CD4-positive, alpha-beta memory T cell (primary cell): ENCODE measurements at regions of chr6 and their contacts with region 1.

Region 1: GRCh38 chr6:167350731-167351655 is 26.1 kb downstream of the TTLL2 start:
- DNase-seq: peak; percentile 79 to 87 (median 82)
- H3K4me3 ChIP-seq: peak overlapping the region; percentile 36 to 72
- H3K4me3 Mint-ChIP-seq: peak overlapping the region; percentile 80 to 96 (median 92)
- H3K27ac ChIP-seq: no peak overlapping the region
- H3K27ac Mint-ChIP-seq: peak overlapping the region; percentile 23 to 93 (median 88)
- H3K4me1 ChIP-seq: peaks cover 17% of the 10 kb centered on the region
- H3K4me1 Mint-ChIP-seq: peaks cover 12 to 25% (median 17%) of the 10 kb centered on the region in 4 donors
- H3K27me3 ChIP-seq: no peaks in the 10 kb centered on the region
- H3K27me3 Mint-ChIP-seq: peaks cover 0 to 3% of the 10 kb centered on the region in 2 donors

Region 2: GRCh38 chr6:167221400-167222201 is 129.4 kb before region 1 on chr6:
- CTCF ChIA-PET with region 1: interaction called, 5 read pairs
- POLR2A ChIA-PET with region 1: no interaction called
- intact Hi-C with region 1: loop called (anchors 5 kb)
- DNase-seq: no peak
- H3K4me3 ChIP-seq: no peak overlapping the region
- H3K4me3 Mint-ChIP-seq: peak overlapping the region in 1 of 8 donors; percentile 52
- H3K27ac ChIP-seq: no peak overlapping the region
- H3K27ac Mint-ChIP-seq: no peak overlapping the region
- H3K4me1 ChIP-seq: no peaks in the 10 kb centered on the region
- H3K4me1 Mint-ChIP-seq: peaks cover 0 to 4% (median 0%) of the 10 kb centered on the region in 4 donors
- H3K27me3 ChIP-seq: no peaks in the 10 kb centered on the region
- H3K27me3 Mint-ChIP-seq: peaks cover 3 to 8% of the 10 kb centered on the region in 2 donors

Region 3: DNA sequence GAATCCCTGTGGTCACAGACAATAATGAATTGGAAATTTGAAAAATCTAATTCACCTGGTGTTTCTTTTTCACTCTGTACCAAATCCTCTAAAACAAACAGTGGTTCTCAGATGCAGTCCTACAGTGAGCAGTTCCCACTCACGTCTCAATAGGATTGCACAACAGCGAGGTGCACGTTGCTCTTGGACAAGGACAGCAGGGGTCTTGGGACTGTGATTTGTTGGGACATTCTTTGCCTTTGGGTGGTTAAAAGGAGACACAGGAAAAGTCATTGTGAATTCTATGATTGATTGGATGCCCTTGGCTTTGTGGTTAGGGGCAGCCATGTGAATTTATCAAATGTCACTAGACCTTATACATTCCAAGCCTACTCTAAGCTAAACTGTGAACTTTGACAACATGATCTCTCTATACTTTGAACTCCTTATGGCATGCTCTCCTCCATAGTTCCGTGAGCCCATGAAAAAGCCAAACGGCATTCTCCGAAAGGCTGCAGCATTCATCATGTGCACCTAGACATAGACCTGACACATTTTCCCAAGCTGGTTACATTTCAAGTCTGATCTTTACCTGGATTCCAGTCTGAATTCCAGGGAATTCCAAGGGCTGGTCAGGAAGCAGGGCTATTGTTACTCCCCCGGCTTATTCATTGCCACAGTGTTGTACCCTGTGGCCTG is 59.2 kb before region 1 on chr6:
- CTCF ChIA-PET with region 1: interaction called, 26 read pairs
- POLR2A ChIA-PET with region 1: no interaction called
- intact Hi-C with region 1: no loop called
- DNase-seq: no peak
- H3K4me3 ChIP-seq: no peak overlapping the region
- H3K4me3 Mint-ChIP-seq: no peak overlapping the region
- H3K27ac ChIP-seq: no peak overlapping the region
- H3K27ac Mint-ChIP-seq: no peak overlapping the region
- H3K4me1 ChIP-seq: no peaks in the 10 kb centered on the region
- H3K4me1 Mint-ChIP-seq: no peaks in the 10 kb centered on the region
- H3K27me3 ChIP-seq: no peaks in the 10 kb centered on the region
- H3K27me3 Mint-ChIP-seq: peaks cover 6% of the 10 kb centered on the region in 2 donors

Region 4: DNA sequence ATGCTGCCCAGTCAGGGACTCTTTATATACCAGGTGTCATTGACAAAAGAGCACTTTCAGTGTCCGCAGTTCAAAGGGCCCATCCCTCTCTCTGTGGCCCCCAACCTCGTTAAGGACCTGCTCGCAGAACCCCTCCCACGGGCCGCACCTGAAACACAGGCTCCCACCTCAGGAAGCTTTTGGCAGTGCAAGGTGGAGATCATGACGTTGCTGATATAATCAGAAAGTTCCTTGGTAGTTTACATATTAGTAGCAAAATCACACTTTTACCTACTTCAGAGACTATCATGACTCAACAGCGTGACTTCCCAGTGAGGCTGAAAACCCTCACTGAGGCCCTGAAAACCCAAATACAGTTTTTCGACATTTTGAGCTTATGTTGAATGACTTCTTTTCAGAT is 22.0 kb before region 1 on chr6:
- CTCF ChIA-PET with region 1: interaction called, 15 read pairs
- POLR2A ChIA-PET with region 1: interaction called, 5 read pairs
- intact Hi-C with region 1: no loop called
- DNase-seq: no peak
- H3K4me3 ChIP-seq: no peak overlapping the region
- H3K4me3 Mint-ChIP-seq: no peak overlapping the region
- H3K27ac ChIP-seq: no peak overlapping the region
- H3K27ac Mint-ChIP-seq: no peak overlapping the region
- H3K4me1 ChIP-seq: no peaks in the 10 kb centered on the region
- H3K4me1 Mint-ChIP-seq: no peaks in the 10 kb centered on the region
- H3K27me3 ChIP-seq: no peaks in the 10 kb centered on the region
- H3K27me3 Mint-ChIP-seq: peaks cover 1 to 9% of the 10 kb centered on the region in 2 donors